Ascending aorta (tissue), 2 donors: ENCODE measurements at regions of chr10 and their contacts with region 1.

Region 1: DNA sequence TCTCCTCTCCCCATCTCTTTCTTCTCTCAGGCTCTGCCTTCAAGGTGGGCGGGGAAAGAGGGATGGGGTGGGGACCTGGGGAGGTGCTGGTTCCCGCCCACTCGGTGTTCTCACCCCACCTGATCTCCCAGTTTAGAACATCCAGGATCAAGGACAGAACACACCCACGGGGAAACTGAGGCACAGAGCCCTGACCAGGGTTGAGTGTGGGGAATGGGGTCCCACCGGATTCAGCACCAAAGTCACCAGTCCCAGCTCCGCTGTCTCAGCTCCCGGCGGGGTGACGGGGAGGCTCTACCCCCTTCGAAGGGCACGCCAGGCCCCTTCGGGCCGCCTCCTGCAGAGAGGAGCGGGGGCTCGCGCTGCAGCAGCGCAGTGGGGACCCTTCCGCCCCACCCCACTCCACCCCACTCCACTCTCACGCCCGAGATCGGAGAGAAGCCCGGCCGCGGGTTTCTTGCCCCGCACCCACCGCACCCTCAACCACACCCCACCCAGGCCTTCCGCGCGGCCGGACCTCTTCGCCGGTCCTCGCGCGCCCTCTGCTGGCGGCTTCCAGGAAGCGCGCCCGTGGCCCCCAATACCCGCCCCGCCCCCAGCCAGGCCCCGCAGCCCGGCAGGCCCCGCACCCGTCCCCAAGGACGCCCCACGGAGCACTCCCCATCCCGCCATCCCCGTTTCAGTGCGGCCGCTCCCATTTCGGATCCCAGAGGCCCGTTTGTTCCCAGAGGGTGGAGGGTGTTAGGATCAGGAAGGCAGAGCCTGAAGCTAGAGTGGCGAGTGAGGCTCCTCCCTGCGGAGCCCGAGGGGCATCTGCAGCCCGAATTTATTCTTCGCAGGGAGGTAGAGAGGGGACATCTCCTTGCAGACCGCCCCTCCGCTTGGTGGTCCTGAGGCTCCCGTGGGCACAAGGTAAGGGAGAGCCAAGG is 18.0 kb downstream of the POLL start:
- DNase-seq: peak in 1 of 2 donors; percentile 85
- H3K4me3 ChIP-seq: peak overlapping the region; percentile 66 to 77
- H3K27ac ChIP-seq: no peak overlapping the region
- H3K4me1 ChIP-seq: peaks cover 0 to 17% of the 10 kb centered on the region in 2 donors
- H3K27me3 ChIP-seq: peaks cover 12% of the 10 kb centered on the region
- CTCF ChIP-seq: peak; percentile 69 to 98 (median 96)

Region 2: GRCh38 chr10:101161494-101162299 is 408.4 kb before region 1 on chr10:
- intact Hi-C with region 1: loop called (anchors 2 kb)
- DNase-seq: peak in 1 of 2 donors; percentile 72
- H3K4me3 ChIP-seq: peak overlapping the region; percentile 25 to 37
- H3K27ac ChIP-seq: no peak overlapping the region
- H3K4me1 ChIP-seq: peaks cover 2% of the 10 kb centered on the region in 2 donors
- H3K27me3 ChIP-seq: peaks cover 8% of the 10 kb centered on the region
- CTCF ChIP-seq: peak; percentile 77 to 98 (median 90)

Region 3: GRCh38 chr10:101214446-101215396 is 355.4 kb before region 1 on chr10:
- intact Hi-C with region 1: loop called (anchors 1 kb)
- DNase-seq: no peak
- H3K4me3 ChIP-seq: peak overlapping the region in 1 of 2 donors; percentile 19
- H3K27ac ChIP-seq: no peak overlapping the region
- H3K4me1 ChIP-seq: peaks cover 7 to 22% of the 10 kb centered on the region in 2 donors
- H3K27me3 ChIP-seq: peaks cover 48% of the 10 kb centered on the region
- CTCF ChIP-seq: peak; percentile 60 to 90 (median 82)

Region 4: GRCh38 chr10:101272229-101272868 is 297.8 kb before region 1 on chr10:
- intact Hi-C with region 1: loop called (anchors 10 kb)
- DNase-seq: peak in 1 of 2 donors; percentile 68
- H3K4me3 ChIP-seq: no peak overlapping the region
- H3K27ac ChIP-seq: no peak overlapping the region
- H3K4me1 ChIP-seq: no peaks in the 10 kb centered on the region
- H3K27me3 ChIP-seq: no peaks in the 10 kb centered on the region
- CTCF ChIP-seq: peak; percentile 44 to 68 (median 64)

Region 5: GRCh38 chr10:101397140-101397539 is 173.0 kb before region 1 on chr10:
- intact Hi-C with region 1: no loop called
- DNase-seq: peak in 1 of 2 donors; percentile 71
- H3K4me3 ChIP-seq: no peak overlapping the region
- H3K27ac ChIP-seq: no peak overlapping the region
- H3K4me1 ChIP-seq: no peaks in the 10 kb centered on the region
- H3K27me3 ChIP-seq: no peaks in the 10 kb centered on the region
- CTCF ChIP-seq: no peak

Region 6: GRCh38 chr10:101545898-101546297 is 24.2 kb before region 1 on chr10:
- intact Hi-C with region 1: no loop called
- DNase-seq: no peak
- H3K4me3 ChIP-seq: no peak overlapping the region
- H3K27ac ChIP-seq: no peak overlapping the region
- H3K4me1 ChIP-seq: peaks cover 0 to 8% of the 10 kb centered on the region in 2 donors
- H3K27me3 ChIP-seq: no peaks in the 10 kb centered on the region
- CTCF ChIP-seq: no peak

Region 7: DNA sequence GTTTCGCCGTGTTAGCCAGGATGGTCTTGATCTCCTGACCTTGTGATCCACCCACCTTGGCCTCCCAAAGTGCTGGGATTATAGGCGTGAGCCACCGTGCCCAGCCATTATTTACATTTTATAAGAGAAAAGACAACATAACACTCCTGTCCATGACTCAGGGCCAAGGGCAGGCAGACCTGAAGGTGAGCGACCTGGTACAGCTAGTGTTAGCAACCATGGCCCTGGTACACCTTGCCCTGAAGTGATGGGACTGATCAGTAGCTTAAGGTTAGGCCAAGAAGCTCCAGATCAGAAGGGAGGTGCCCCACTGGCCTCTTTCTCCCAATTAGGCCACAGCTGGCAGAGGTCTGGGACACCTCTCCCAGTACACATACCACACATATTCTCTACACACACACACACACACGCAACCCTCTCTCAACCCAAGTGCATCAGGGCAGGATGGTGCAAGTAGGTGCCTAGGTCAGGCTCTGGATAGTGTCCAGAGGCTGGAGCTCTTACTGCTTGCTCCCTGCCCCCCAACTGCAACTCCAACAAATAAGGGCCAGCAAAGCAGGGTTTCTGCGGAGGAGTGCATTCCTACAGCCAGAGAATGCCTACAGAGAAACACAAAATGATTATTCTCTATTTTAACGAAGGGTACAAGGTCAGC is 61.8 kb after region 1 on chr10:
- intact Hi-C with region 1: no loop called
- DNase-seq: no peak
- H3K4me3 ChIP-seq: no peak overlapping the region
- H3K27ac ChIP-seq: no peak overlapping the region
- H3K4me1 ChIP-seq: no peaks in the 10 kb centered on the region
- H3K27me3 ChIP-seq: no peaks in the 10 kb centered on the region
- CTCF ChIP-seq: no peak